ENCODE measurements at regions of chr4 and their contacts with region 1.

Region 1: GRCh38 chr4:63563288-63564014 is 845.8 kb downstream of the TECRL start:
- DNase-seq: no peak
- ATAC-seq: no peak
- H3K4me3 ChIP-seq: no peak overlapping the region
- H3K27ac ChIP-seq: no peak overlapping the region
- H3K4me1 ChIP-seq: no peaks in the 10 kb centered on the region
- H3K27me3 ChIP-seq: no peaks in the 10 kb centered on the region
- CTCF ChIP-seq: peak; percentile 16; the same call in 1 of the 2 replicates

Region 2: DNA sequence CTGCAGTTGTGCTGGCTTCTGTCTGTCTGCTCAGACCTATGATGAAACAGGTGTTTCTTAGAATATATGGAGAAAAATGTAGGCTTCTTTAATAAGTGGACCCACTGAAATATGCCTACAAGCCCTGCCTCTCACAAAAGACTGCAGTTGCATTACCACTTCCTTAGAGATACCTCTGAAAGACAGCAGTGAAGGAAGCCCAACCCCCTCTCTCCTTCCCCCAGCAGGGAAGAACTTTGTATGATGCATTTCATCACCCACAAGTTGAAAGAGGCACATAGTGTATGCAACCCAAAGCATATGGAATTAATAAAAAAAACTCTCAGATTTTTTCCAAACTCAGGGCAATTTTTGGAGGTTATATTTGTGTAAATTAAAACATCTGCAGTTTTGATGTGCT is 70.9 kb before region 1 on chr4:
- CTCF ChIA-PET with region 1: no interaction called
- POLR2A ChIA-PET with region 1: interaction called, 12 read pairs
- in situ Hi-C with region 1: no loop called
- intact Hi-C with region 1: no loop called
- DNase-seq: no peak
- ATAC-seq: no peak
- H3K4me3 ChIP-seq: no peak overlapping the region
- H3K27ac ChIP-seq: no peak overlapping the region
- H3K4me1 ChIP-seq: no peaks in the 10 kb centered on the region
- H3K27me3 ChIP-seq: no peaks in the 10 kb centered on the region
- CTCF ChIP-seq: no peak